ENCODE measurements at regions of chr3 and their contacts with region 1.

Region 1: DNA sequence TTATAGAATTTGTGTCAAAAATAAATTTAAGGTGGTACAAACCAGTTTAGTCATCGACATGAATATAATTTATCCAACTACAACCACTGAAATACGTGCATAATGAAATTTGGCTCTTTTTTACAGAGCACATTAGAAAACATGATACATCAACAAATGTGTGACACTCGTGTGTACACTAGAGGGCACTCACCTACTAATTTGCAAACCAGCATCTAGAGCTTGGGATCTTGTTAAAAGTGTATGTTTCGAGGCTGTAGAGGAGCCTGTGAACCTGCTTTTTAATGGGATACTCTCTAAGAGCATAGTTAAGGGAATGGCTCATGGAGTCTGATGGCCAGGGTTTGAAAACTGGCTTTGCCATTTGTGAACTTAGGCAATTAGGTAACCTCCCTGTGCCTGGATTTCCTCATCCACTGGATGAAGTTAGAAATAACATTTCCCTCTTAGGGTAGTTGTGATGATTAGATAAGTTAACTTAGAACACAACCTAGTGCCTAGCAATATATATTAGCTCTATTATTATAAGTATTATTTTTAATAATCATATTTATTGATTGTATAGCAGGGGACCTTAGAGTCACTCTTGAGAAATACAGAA is 8.8 kb upstream of the CPOX start:
- DNase-seq: peak; percentile 30
- ATAC-seq: peak; percentile 78
- H3K4me3 Mint-ChIP-seq: no peak overlapping the region
- H3K27ac Mint-ChIP-seq: no peak overlapping the region
- H3K4me1 Mint-ChIP-seq: peaks cover 4% of the 10 kb centered on the region
- H3K27me3 Mint-ChIP-seq: peaks cover 2% of the 10 kb centered on the region

Region 2: DNA sequence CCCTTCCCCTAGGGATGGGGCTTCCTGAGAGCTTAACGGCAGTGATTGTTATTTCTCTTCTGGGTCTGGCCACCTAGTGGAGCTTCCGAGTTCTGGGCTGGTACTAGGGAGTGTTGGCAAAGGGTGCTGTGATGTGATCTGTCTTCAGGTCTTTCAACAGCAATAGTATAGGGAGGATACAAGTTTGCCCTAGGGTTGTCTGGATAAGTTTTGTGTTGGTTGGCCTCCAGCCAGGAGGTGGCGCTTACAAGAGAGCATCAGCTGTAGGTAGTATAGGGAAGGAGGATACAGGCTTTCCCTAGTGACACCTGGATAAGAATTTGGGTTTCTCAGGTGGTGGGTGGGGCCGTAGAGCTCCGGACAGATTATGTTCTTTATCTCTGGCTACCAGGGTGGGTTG is 10.4 kb after region 1 on chr3:
- CTCF ChIA-PET with region 1: interaction called, 23 read pairs
- POLR2A ChIA-PET with region 1: no interaction called
- intact Hi-C with region 1: no loop called
- DNase-seq: peak; percentile 29
- ATAC-seq: no peak
- H3K4me3 Mint-ChIP-seq: no peak overlapping the region
- H3K27ac Mint-ChIP-seq: no peak overlapping the region
- H3K4me1 Mint-ChIP-seq: no peaks in the 10 kb centered on the region
- H3K27me3 Mint-ChIP-seq: peaks cover 3% of the 10 kb centered on the region

Region 3: DNA sequence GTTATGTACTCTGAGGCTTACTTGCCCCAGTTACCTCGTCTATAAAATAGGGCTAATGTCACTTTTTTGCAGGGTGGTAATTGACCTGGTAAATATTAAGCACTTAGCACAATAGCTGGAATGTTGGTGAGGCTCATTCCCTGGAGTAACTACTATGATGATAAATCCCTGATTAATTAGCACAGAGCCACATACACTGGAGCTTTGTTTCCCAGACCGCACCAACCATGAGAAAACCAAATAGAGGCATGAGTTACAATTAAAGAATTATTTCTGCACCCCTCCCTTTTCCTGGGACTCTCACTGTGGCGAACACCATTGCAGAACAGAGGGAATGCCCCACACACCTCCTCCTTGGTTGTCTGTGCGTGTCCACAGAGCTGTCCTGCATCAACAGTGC is 67.8 kb after region 1 on chr3:
- CTCF ChIA-PET with region 1: interaction called, 11 read pairs
- POLR2A ChIA-PET with region 1: interaction called, 3 read pairs
- intact Hi-C with region 1: no loop called
- DNase-seq: no peak
- ATAC-seq: no peak
- H3K4me3 Mint-ChIP-seq: no peak overlapping the region
- H3K27ac Mint-ChIP-seq: no peak overlapping the region
- H3K4me1 Mint-ChIP-seq: no peaks in the 10 kb centered on the region
- H3K27me3 Mint-ChIP-seq: no peaks in the 10 kb centered on the region